ENCODE measurements at regions of chr12 and their contacts with region 1.

Region 1: DNA sequence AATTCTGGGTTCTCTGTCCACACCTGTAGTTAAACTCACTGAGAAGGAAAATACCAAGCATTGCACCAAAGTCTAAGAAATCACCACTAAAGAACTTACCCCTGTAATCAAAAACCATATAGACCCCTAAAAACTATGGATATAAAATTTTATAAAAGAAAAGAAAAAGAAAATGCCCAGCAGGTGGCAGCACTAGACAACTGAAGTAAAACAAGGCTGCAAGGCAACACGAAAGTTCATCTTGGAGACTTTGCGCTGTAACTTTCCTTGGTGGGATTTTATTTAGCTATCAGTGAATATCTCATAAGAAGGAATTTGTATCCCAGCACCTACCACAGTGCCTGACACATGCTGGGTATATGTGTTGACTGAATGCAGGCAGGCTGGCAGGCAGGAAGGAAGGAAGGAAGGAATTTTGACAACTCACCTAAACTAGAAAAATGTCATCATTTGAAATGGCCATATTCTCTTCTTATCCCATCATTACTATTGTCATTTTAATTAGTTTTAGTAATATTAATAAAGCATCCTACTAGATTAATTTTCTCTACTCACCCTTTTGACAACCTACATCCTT is 68.2 kb upstream of the ETV6 start:
- DNase-seq: peak in 5 of 10 donors; percentile 17 to 64 (median 49)

Region 2: DNA sequence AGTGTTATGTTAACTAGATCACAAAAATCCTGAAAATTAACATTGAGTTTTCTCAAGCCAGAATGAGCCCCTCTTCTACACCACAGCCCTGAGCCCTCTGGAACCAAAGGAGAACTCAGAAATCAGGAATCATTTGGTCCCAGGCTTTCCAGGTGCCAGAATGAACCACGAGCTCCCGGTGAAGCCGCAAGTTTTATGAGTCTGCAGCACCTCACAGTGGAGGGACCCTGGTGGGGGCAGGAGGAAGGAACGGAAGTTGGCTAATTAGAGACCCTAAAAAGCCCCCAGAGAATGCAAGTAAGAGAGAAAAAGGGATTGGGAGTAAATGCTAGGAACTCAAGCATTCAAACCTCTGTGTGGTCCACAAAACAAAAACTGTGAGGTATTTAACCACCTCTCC is 436.5 kb after region 1 on chr12:
- intact Hi-C with region 1: loop called (anchors 5 kb)
- DNase-seq: no peak

Region 3: DNA sequence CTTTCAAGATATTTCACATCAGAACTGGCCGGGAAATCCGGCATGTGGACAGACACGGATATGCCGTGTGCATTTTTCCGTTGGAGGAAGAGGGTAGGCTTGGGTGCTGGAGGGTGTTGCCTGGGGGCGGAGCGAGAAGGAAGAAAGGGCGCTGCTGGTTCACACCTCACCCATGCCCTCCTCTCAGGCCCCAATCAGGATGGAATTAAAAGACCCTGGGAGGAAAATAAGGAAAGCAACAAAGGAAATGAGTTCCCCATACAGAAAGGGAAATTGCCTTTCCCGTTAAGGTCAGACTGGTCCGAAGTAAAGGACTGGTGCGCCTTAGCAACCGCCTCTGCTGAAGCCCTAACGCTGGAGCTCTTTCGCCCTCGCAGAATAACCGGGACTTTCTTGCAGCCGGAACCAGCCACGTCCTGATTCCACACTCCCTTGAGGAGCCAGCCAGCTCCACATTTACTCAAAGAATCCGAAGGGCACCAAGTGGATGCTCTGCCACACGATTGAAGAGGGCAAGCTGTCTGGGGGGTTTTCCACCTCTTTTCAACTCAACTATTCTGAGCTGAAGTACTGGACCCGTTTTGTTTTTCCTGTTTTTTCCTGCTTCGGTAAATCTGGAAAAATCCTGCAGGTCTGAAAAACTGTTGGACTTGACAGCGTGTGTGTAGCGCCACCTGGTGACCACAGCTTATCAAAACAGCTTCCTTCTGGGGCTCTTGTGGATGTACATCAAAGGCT is 451.8 kb after region 1 on chr12:
- intact Hi-C with region 1: loop called (anchors 1 kb)
- DNase-seq: peak; percentile 56 to 97 (median 84)

Region 4: DNA sequence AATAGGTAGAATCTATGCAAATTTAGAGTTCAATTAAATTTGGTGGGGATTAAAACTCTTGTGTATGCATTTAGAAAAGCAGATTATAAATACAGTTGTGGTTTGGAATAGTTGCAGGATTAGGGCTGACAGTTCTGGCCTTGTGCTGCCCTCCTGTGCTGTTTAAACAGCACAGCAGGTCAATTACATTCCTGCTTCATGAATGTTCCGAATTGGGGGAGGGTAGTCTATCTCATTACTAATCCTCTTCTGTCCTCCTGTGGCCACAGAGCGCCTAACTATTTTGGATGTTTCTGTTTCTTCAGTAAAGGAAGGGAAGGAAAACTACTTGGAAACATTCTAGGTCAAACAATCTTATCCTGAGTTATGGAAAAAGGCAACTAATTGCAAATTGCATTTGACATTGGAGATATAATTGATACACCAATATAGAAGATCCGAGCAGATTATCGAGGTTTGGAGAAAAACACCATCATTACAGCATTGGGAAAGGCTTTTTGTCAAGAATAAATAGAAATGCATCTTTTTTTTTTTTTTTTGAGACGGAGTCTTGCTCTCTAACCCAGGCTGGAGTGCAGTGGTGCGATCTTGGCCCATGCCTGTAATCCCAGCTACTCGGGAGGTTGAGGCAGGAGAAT is 1123.4 kb after region 1 on chr12:
- intact Hi-C with region 1: loop called (anchors 10 kb)
- DNase-seq: peak in 5 of 10 donors; percentile 40 to 90 (median 53)

Measured in posterior cingulate gyrus (tissue), 11 donors.